ENCODE measurements at regions of chr4 and their contacts with region 1.

Region 1: GRCh38 chr4:159227984-159228383 is 125.1 kb downstream of the RAPGEF2 start:
- DNase-seq: peak; percentile 3
- ATAC-seq: no peak
- H3K4me3 ChIP-seq: no peak overlapping the region
- H3K27ac ChIP-seq: no peak overlapping the region
- H3K4me1 ChIP-seq: peaks cover 35% of the 10 kb centered on the region
- H3K27me3 ChIP-seq: no peaks in the 10 kb centered on the region
- CTCF ChIP-seq: no peak
- EP300 ChIP-seq: no peak
- POLR2A ChIP-seq: no peak
- RAD21 ChIP-seq: no peak

Region 2: GRCh38 chr4:158729716-158730559 is 498.0 kb before region 1 on chr4:
- CTCF ChIA-PET with region 1: no interaction called
- POLR2A ChIA-PET with region 1: no interaction called
- in situ Hi-C with region 1: no loop called
- intact Hi-C with region 1: no loop called
- DNase-seq: peak; percentile 67
- ATAC-seq: peak; percentile 99
- H3K4me3 ChIP-seq: peak overlapping the region in 2 of 3 experiments; percentile 13 to 14; a peak in 2 of 6 replicates
- H3K27ac ChIP-seq: no peak overlapping the region
- H3K4me1 ChIP-seq: peaks cover 21% of the 10 kb centered on the region
- H3K27me3 ChIP-seq: no peaks in the 10 kb centered on the region; a peak in 1 of 5 replicates
- CTCF ChIP-seq: peak; percentile 93
- EP300 ChIP-seq: no peak
- POLR2A ChIP-seq: no peak
- RAD21 ChIP-seq: peak; percentile 90

Region 3: DNA sequence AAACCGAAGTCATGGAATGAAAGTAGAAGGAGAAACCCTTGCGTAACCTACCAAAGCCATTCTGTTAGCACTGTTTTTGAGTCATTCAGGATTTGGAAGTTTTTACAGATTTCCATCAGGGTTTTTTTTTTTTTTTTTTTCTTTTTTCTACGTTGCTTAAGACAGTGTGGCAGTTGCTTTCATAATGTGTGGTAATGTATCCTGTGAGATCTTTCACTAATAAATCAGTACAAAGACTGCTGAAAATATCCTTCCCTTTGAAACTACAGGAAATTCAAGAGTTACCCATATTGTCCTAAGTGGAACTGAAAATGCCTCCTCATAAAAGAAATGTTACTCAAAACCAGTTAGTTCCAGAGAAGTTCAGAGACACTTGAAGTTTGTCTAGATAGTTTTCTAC is 12.7 kb after region 1 on chr4:
- CTCF ChIA-PET with region 1: no interaction called
- POLR2A ChIA-PET with region 1: no interaction called
- in situ Hi-C with region 1: no loop called
- intact Hi-C with region 1: loop called (anchors 2 kb)
- DNase-seq: no peak
- ATAC-seq: no peak
- H3K4me3 ChIP-seq: no peak overlapping the region
- H3K27ac ChIP-seq: no peak overlapping the region
- H3K4me1 ChIP-seq: peaks cover 4% of the 10 kb centered on the region
- H3K27me3 ChIP-seq: no peaks in the 10 kb centered on the region
- CTCF ChIP-seq: no peak
- EP300 ChIP-seq: no peak
- POLR2A ChIP-seq: no peak
- RAD21 ChIP-seq: no peak

Measured in HepG2 (cell line).